GM23248 (cell line): ENCODE measurements at regions of chr12 and their contacts with region 1.

Region 1: GRCh38 chr12:96578526-96579125 is 89.2 kb downstream of the CFAP54 start:
- DNase-seq: peak; percentile 80
- H3K4me3 ChIP-seq: peak overlapping the region; percentile 24; the same call in 1 of the 2 replicates
- H3K27ac ChIP-seq: no peak overlapping the region
- H3K4me1 ChIP-seq: no peaks in the 10 kb centered on the region
- H3K27me3 ChIP-seq: no peaks in the 10 kb centered on the region

Region 2: GRCh38 chr12:96677363-96677762 is 98.7 kb after region 1 on chr12:
- in situ Hi-C with region 1: no loop called
- DNase-seq: no peak
- H3K4me3 ChIP-seq: no peak overlapping the region
- H3K27ac ChIP-seq: no peak overlapping the region
- H3K4me1 ChIP-seq: no peaks in the 10 kb centered on the region
- H3K27me3 ChIP-seq: peaks cover 6% of the 10 kb centered on the region; the same call in 1 of the 2 replicates

Region 3: GRCh38 chr12:98397316-98398105 is 1818.9 kb after region 1 on chr12:
- in situ Hi-C with region 1: loop called (anchors 25 kb)
- DNase-seq: peak; percentile 86
- H3K4me3 ChIP-seq: peak overlapping the region; percentile 70
- H3K27ac ChIP-seq: no peak overlapping the region
- H3K4me1 ChIP-seq: peaks cover 14% of the 10 kb centered on the region
- H3K27me3 ChIP-seq: peaks cover 14% of the 10 kb centered on the region; the same call in 1 of the 2 replicates